Tibial artery (tissue), 4 donors: ENCODE measurements at regions of chr12 and their contacts with region 1.

Region 1: DNA sequence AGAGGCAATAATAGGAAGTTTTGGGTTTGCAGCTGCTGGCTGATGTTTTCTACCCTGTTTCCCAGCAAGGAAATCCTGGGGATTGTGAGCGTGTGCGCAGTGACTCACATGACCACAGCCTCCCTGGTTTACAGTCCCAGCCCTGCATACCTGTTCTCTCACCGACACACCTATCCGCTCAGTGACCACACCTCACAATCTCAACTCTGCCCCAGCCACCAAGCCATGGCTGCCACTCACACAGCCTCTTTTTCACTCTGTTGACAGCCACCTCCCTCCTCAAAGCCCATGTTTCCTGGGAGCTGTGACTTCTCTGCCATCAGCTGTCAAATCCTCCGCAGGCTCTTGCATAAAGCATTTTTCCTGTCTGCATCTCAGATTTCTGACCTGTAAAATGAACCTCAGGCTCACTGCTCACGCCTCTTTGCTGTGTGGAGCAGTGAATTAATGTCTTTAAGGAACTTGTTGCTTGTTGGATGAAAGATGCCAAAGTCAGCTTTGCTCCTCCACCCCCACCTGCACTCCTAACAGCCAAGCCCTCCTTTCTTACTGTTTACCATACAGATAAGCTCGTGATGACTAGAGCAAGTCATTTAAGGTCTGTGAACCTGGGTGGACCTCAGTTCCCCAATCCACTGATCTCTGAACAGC is 43.5 kb downstream of the B4GALNT3 start:
- DNase-seq: no peak
- H3K4me3 ChIP-seq: no peak overlapping the region
- H3K27ac ChIP-seq: no peak overlapping the region
- H3K4me1 ChIP-seq: peaks cover 0 to 18% (median 4%) of the 10 kb centered on the region in 4 donors
- H3K27me3 ChIP-seq: no peaks in the 10 kb centered on the region
- CTCF ChIP-seq: no peak

Region 2: DNA sequence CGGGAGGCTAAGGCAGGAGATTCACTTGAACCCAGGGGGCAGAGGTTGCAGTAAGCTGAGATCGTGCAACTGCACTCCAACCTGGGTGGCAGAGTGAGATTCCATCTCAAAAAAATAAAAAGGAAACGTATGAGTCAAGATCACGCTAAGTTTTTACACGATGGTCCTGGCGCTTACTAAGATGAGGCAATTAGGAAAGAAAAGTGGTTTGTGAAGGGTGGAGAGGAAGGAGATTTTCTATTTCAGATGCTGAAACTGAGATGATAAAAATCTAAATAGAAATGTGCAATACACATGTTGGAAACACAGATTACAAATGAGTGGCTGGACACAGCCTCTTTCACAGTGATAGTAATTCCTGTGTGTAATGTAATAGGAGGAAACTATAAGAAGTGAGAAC is 177.3 kb before region 1 on chr12:
- intact Hi-C with region 1: no loop called
- DNase-seq: no peak
- H3K4me3 ChIP-seq: no peak overlapping the region
- H3K27ac ChIP-seq: no peak overlapping the region
- H3K4me1 ChIP-seq: no peaks in the 10 kb centered on the region
- H3K27me3 ChIP-seq: no peaks in the 10 kb centered on the region
- CTCF ChIP-seq: no peak

Region 3: GRCh38 chr12:546921-547845 is 43.9 kb after region 1 on chr12:
- intact Hi-C with region 1: loop called (anchors 5 kb)
- DNase-seq: no peak
- H3K4me3 ChIP-seq: no peak overlapping the region
- H3K27ac ChIP-seq: no peak overlapping the region
- H3K4me1 ChIP-seq: peaks cover 0 to 11% (median 6%) of the 10 kb centered on the region in 4 donors
- H3K27me3 ChIP-seq: no peaks in the 10 kb centered on the region
- CTCF ChIP-seq: peak; percentile 99 to 100

Region 4: GRCh38 chr12:563250-563781 is 60.1 kb after region 1 on chr12:
- intact Hi-C with region 1: no loop called
- DNase-seq: no peak
- H3K4me3 ChIP-seq: peak overlapping the region in 1 of 2 donors; percentile 26
- H3K27ac ChIP-seq: no peak overlapping the region
- H3K4me1 ChIP-seq: no peaks in the 10 kb centered on the region
- H3K27me3 ChIP-seq: no peaks in the 10 kb centered on the region
- CTCF ChIP-seq: no peak